ENCODE measurements at regions of chr3 and their contacts with region 1.

Region 1: GRCh38 chr3:124768812-124769211 is 38.6 kb downstream of the UMPS start:
- DNase-seq: peak; percentile 40
- H3K4me3 ChIP-seq: no peak overlapping the region
- H3K27ac ChIP-seq: peak overlapping the region in 1 of 2 experiments; percentile 98; a peak in 1 of 4 replicates
- H3K4me1 ChIP-seq: peaks cover 31 to 73% of the 10 kb centered on the region in 2 experiments
- H3K27me3 ChIP-seq: no peaks in the 10 kb centered on the region
- CTCF ChIP-seq: peak; percentile 29; the same call in 1 of the 2 replicates
- EP300 ChIP-seq: no peak; a peak in 1 of 4 replicates
- RAD21 ChIP-seq: peak; percentile 21; the same call in 1 of the 2 replicates

Region 2: GRCh38 chr3:124786441-124787241 is 17.8 kb after region 1 on chr3:
- CTCF ChIA-PET with region 1: interaction called, 18 read pairs
- POLR2A ChIA-PET with region 1: interaction called, 3 read pairs
- DNase-seq: no peak
- H3K4me3 ChIP-seq: no peak overlapping the region
- H3K27ac ChIP-seq: peak overlapping the region; percentile 47 to 83; a peak in 3 of 4 replicates
- H3K4me1 ChIP-seq: peaks cover 21 to 33% of the 10 kb centered on the region in 2 experiments
- H3K27me3 ChIP-seq: no peaks in the 10 kb centered on the region
- CTCF ChIP-seq: peak; percentile 66
- EP300 ChIP-seq: no peak
- RAD21 ChIP-seq: peak; percentile 63

Region 3: DNA sequence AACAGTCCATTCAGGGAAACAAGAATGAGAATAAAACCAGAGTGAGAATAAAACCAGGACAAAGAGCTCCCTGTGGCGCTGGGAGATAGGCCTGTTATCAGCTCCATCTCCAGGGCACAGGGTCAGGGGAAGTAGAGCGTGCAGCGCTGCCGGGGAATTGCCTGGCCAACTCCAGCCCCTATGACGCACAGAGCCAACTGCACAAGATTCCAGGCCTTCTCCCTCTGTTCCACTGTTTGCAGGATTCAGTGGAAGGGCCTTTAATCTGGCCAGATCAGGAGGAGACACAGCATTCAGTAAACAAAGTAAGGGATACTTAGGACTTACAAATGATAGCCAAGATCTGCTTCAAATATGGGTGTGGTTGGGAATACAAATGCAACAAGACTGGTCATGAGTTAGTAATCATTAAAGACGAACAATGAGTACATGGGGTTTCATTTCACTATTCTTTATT is 68.9 kb after region 1 on chr3:
- CTCF ChIA-PET with region 1: interaction called, 4 read pairs
- POLR2A ChIA-PET with region 1: interaction called, 21 read pairs
- DNase-seq: peak; percentile 82
- H3K4me3 ChIP-seq: peak overlapping the region in 1 of 2 experiments; percentile 4; a peak in 1 of 4 replicates
- H3K27ac ChIP-seq: peak overlapping the region; percentile 95 to 100
- H3K4me1 ChIP-seq: peaks cover 48 to 71% of the 10 kb centered on the region in 2 experiments
- H3K27me3 ChIP-seq: no peaks in the 10 kb centered on the region
- CTCF ChIP-seq: no peak
- EP300 ChIP-seq: peak; percentile 81 to 99
- RAD21 ChIP-seq: 0 out of 2 replicates have a peak, but pooled peaks have one; percentile 36

Region 4: DNA sequence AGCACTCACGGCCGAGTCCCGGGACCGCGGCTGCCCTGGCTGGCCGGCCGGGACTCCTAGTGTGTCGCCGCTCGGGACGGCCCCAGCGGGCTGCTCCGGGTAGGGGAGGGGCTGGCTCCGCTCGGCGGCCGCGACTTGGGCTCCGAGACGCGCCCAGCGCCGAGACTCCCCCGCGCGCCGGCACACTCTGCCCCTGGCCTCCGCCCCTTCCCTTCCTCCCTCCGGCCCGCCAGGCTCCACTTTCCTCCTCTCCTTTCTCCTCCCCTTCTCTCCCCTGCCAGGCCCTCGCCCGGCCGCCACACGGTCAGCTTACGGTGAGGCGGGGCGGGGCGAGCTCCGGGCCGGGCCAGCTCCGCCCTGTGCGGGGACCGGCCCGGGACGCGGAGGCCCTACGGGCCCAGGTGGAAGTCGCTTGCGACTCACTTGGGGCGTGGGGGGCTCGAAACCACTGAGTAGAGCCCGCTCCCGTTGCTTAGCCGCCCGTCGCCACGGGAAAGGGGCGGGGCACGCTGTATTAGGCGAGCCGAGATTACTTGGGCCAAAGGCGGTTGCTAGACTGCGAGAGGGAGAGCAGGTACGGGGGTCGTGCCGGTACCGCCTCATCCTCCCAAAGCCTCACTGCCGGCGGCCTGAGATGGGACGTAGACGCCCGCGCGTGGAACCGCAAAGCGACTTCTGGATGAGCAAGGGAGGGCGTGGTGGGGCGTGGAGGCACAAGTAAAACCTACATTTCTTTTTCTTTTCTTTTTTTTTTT is 118.5 kb after region 1 on chr3 and contains the start of gene ITGB5:
- CTCF ChIA-PET with region 1: interaction called, 42 read pairs
- POLR2A ChIA-PET with region 1: interaction called, 19 read pairs
- DNase-seq: peak; percentile 90
- H3K4me3 ChIP-seq: peak within 1 kb of the TSS; percentile 76 to 79
- H3K27ac ChIP-seq: peak within 1 kb of the TSS; percentile 71 to 92
- H3K4me1 ChIP-seq: peaks cover 30% of the 10 kb centered on the region in 2 experiments
- H3K27me3 ChIP-seq: no peaks in the 10 kb centered on the region
- CTCF ChIP-seq: no peak
- EP300 ChIP-seq: 0 out of 4 replicates have a peak, but pooled peaks of 1 of the 2 experiments have one; percentile 5
- RAD21 ChIP-seq: 0 out of 2 replicates have a peak, but pooled peaks have one; percentile 4
- polyA plus RNA-seq, gene ITGB5: 328 and 481 TPM in 2 replicates

Measured in SK-N-SH (cell line).